GM10248 (cell line): ENCODE measurements at regions of chr14 and their contacts with region 1.

Region 1: GRCh38 chr14:73633116-73634010 is 11.4 kb upstream of the DNAL1 start:
- DNase-seq: peak; percentile 77
- CTCF ChIP-seq: peak; percentile 74

Region 2: GRCh38 chr14:73358187-73358586 is 275.2 kb before region 1 on chr14:
- CTCF ChIA-PET with region 1: no interaction called
- POLR2A ChIA-PET with region 1: no interaction called
- DNase-seq: no peak
- CTCF ChIP-seq: no peak

Region 3: DNA sequence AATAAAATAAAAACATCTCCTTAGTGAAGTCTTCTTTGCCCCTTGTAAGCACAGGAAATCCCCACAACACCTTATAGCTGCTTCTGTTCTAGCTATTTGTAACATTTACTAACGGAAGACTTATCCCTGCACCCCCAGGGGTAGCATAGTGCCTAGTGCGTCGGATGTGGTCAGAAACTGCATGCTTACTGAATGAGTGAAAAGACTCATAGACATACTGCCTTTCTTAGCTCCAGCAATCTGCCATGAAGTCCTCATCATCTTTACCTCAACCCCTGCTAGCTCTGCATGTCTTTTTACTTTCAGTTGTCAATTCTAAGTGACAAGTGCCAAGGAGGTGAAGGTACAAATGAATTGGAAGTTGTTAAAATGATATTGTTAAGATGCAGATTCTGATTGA is 129.7 kb before region 1 on chr14:
- CTCF ChIA-PET with region 1: interaction called, 71 read pairs
- POLR2A ChIA-PET with region 1: no interaction called
- DNase-seq: no peak
- CTCF ChIP-seq: no peak

Region 4: DNA sequence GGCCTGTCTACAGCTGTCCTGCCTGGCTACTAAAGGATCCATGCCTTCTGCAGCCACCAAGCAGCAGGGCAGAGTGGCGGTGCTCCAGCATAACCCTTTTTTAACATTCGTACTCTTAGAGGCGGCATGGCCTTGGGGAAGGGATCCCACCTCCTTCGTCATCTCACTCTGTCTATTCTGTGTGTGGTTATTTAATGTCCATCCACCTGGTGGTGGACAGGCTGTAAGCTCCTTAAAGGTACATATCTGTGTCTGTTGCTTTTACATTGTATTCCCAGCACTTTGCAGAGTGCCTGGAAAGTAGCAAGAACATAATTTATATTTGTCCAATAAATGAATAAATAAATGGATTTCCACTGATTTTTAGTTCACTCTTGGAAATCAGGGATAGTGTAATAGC is 112.1 kb before region 1 on chr14:
- CTCF ChIA-PET with region 1: interaction called, 10 read pairs
- POLR2A ChIA-PET with region 1: no interaction called
- DNase-seq: no peak
- CTCF ChIP-seq: no peak

Region 5: DNA sequence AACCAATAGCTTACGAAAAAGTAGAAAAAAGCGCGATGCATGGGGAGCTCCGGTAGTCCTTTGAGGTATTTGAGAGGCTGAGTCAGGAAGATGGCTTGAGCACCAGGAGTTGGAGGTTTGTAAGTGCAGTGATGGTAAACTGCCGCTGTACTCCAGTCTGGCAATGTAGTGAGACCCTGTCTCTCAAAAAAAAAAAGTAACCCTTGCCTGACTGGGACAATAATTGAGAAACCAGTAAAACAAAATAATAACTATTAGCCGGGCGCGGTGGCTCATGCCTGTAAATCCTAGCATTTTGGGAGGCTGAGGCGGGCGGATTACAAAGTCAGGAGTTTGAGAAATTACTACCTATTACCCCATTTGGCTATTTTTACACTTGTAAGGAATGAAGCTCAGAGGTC is 65.0 kb before region 1 on chr14:
- CTCF ChIA-PET with region 1: interaction called, 10 read pairs
- POLR2A ChIA-PET with region 1: no interaction called
- DNase-seq: no peak
- CTCF ChIP-seq: no peak

Region 6: GRCh38 chr14:73644531-73645247 is 11.3 kb after region 1 on chr14 and contains the start of gene DNAL1:
- CTCF ChIA-PET with region 1: interaction called, 23 read pairs
- POLR2A ChIA-PET with region 1: no interaction called
- DNase-seq: peak; percentile 99
- CTCF ChIP-seq: no peak